ENCODE measurements at regions of chr19 and their contacts with region 1.

Region 1: DNA sequence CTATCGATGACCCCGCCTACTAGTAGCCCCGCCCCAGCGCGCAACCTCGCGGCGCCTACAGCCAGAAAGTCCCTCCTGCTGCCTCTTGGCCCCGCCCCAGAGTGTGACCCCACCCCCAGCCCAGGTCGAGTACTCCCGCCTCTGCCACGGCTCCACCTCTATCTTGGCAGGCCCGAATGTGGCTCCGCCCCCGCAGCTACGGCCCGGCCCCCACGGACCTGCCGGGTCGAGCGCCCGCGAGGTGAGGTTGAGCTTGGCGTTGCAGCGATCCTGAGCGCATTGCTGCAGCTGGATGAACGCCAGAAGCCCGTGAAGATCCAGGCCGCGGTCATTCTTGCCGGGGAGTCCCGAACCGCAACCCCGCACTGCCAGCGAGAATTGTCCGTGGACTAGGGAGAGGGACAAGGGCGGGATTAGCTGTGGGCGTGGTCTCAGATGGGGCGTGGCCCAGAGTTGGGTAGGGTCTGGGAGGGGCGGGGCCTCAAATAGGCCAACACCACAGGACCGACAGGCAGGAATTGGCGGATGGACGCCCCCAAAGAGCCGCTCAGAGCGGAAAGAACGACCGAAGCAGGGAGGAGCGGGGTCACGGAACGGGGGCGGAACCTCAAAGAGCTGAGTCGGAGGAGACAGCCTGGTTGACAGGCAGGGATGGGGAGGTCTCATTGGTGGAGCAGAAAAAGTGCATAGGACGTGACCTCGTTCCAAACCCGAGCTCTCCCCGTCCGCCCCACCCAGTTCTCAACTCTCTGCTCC is 1.8 kb downstream of the LYPD3 start:
- DNase-seq: peak; percentile 98 to 100 (median 99)
- ATAC-seq: peak; percentile 96 to 97
- H3K4me3 ChIP-seq: peak overlapping the region; percentile 69
- H3K27ac ChIP-seq: peak overlapping the region; percentile 13
- H3K4me1 ChIP-seq: no peaks in the 10 kb centered on the region
- H3K27me3 ChIP-seq: no peaks in the 10 kb centered on the region

Region 2: DNA sequence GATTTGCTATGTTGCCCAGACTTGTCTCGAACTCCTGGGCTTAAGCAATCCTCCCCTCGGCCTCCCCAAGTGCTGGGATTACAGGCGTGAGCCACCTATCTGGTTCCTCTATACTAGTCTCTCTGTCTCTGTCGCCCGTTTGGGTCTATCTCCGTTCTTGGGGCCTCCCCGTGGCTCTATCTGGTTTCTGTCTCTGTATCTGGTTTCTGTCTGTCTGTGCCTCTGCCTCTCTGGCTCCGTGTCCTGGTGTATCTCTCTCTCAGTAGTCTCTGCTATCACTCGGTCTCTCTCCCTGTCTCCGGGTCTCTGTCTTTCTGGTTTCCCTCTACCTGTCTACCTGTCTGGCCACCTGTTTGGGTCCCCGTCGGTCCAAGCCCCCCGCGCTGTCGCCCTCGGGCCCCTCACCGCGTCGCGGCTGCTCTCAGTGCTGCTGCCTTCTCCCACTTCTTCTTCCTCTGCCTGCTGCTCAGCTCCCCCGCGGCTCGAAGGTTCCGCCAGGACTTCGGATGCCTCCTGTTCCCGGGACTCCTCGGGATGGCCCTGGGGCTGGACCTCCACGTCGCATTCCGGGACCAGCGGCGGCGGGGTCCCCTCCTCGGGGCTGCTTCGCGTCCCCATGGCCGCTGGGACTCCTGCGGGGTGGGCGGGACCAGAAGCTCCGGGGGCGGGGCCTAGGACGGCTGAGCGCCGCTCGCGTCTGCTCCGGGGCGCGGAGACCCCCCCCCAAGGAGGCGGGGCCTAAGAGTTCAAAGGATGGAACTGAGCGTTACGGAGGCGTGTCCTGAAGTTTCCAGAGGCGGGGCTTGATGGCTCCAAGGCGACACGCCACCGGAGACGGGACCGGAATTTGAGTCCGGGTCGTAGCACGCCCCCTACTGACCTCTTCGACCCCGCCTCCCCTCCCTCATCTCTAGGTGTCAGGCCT is 40.2 kb after region 1 on chr19:
- intact Hi-C with region 1: loop called in 2 of 4 experiments (anchors 5 kb)
- DNase-seq: peak; percentile 99 to 100 (median 99)
- ATAC-seq: peak; percentile 99
- H3K4me3 ChIP-seq: peak overlapping the region; percentile 63
- H3K27ac ChIP-seq: peak overlapping the region; percentile 91
- H3K4me1 ChIP-seq: peaks cover 3% of the 10 kb centered on the region
- H3K27me3 ChIP-seq: no peaks in the 10 kb centered on the region

Region 3: DNA sequence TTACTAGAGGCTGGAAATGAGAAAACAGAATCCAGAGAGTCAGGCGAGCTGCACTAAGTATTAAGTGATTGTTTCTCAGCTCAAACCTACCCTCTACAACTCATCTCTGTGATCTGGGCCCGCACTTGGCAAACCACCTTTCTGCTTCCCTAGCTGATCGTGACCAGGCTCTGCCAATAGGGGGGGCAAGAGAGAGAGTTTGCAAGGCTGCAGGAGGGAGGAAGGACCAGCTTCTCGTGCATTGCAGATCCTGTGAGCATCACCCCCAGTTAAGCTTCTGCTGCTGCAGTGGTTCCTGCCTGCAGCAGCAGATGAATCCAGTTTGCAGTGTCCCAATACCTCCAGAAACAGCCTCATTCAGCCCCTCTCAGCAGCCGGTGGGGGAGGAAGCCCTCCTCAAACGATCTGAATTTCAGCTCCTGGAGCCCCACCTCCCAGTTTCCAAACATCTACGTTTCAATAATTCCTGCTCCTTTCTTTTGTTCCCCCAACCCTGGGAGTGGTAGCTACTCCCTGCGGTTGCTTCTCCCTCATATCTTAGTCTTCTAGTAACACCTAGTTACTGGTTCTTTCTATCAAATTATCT is 91.7 kb after region 1 on chr19:
- intact Hi-C with region 1: no loop called
- DNase-seq: peak; percentile 58 to 76 (median 73)
- ATAC-seq: peak in 1 of 2 donors; percentile 71
- H3K4me3 ChIP-seq: no peak overlapping the region
- H3K27ac ChIP-seq: no peak overlapping the region
- H3K4me1 ChIP-seq: no peaks in the 10 kb centered on the region
- H3K27me3 ChIP-seq: no peaks in the 10 kb centered on the region

Measured in right cardiac atrium (tissue), 5 donors.